Naive thymus-derived CD4-positive, alpha-beta T cell (primary cell): ENCODE measurements at regions of chr14 and their contacts with region 1.

Region 1: GRCh38 chr14:67816326-67817002 is at the start of gene ZFYVE26:
- DNase-seq: peak; percentile 55 to 93 (median 87)
- ATAC-seq: peak; percentile 96
- H3K4me3 ChIP-seq: peak within 1 kb of the TSS; percentile 91
- H3K4me3 Mint-ChIP-seq: peak within 1 kb of the TSS; percentile 87 to 99 (median 98)
- H3K27ac ChIP-seq: peak within 1 kb of the TSS; percentile 76
- H3K27ac Mint-ChIP-seq: peak within 1 kb of the TSS; percentile 91 to 99 (median 98)
- H3K4me1 ChIP-seq: peaks cover 11 to 15% of the 10 kb centered on the region in 2 donors
- H3K4me1 Mint-ChIP-seq: peaks cover 24 to 73% (median 65%) of the 10 kb centered on the region in 7 donors
- H3K27me3 ChIP-seq: no peaks in the 10 kb centered on the region
- H3K27me3 Mint-ChIP-seq: no peaks in the 10 kb centered on the region
- total RNA-seq, gene ZFYVE26: 25.0 to 38.9 (median 31.1) TPM

Region 2: DNA sequence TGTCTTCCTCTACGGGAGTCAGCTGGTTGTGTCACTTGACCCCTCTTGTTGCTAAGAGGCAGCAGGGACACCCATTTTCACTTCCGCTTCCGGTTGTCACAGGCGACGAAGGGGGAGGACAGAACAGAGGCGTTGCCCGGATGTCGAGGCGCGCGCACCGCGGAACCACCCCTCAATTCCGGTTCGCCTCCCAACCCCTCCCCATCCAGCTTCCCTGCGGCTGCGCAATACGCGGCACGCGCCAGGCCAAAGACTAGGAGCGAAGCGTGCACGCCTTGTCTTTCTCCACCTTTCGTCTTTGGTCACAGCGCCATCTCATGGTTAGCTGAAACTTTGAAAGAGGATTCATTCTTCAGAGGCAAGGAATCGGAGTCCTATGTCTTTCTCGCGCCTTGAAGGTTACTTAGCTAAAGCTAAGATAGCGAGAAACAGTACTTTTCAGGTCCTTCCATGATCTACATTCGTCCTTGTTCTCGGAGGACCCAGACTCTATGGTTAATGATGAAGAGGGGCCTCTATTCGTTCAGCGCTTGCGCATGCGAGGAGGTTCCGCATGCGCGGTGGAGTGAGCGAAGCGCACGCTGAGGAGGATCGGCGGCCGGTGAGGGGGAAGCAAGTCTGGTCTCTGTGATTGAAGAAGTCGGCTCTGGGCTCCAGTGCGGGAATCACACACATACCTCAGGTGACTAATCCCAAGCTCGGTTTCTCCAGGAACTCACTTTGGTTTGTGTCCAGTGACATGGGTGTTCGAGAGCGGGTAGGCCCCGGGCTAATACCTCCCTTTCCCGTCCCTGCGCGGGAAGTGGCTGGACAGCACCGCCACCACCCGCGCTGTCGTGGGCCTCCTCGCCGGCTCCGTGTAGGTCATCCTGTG is 456.5 kb before region 1 on chr14 and contains the starts of genes ATP6V1D and EIF2S1:
- CTCF ChIA-PET with region 1: no interaction called
- POLR2A ChIA-PET with region 1: interaction called, 4 read pairs
- intact Hi-C with region 1: loop called (anchors 1 kb)
- DNase-seq: peak; percentile 97 to 100 (median 100)
- ATAC-seq: peak; percentile 94
- H3K4me3 ChIP-seq: peak within 1 kb of the TSS; percentile 87
- H3K4me3 Mint-ChIP-seq: peak within 1 kb of the TSS; percentile 93 to 99 (median 98)
- H3K27ac ChIP-seq: peak within 1 kb of the TSS; percentile 82
- H3K27ac Mint-ChIP-seq: peak within 1 kb of the TSS; percentile 94 to 99 (median 96)
- H3K4me1 ChIP-seq: peaks cover 24 to 38% of the 10 kb centered on the region in 2 donors
- H3K4me1 Mint-ChIP-seq: peaks cover 43 to 94% (median 85%) of the 10 kb centered on the region in 7 donors
- H3K27me3 ChIP-seq: no peaks in the 10 kb centered on the region
- H3K27me3 Mint-ChIP-seq: peaks cover 0 to 5% (median 0%) of the 10 kb centered on the region in 5 donors
- total RNA-seq, gene ATP6V1D: 28.5 to 41.5 (median 33.4) TPM
- total RNA-seq, gene EIF2S1: 41.4 to 115 (median 49.4) TPM

Region 3: DNA sequence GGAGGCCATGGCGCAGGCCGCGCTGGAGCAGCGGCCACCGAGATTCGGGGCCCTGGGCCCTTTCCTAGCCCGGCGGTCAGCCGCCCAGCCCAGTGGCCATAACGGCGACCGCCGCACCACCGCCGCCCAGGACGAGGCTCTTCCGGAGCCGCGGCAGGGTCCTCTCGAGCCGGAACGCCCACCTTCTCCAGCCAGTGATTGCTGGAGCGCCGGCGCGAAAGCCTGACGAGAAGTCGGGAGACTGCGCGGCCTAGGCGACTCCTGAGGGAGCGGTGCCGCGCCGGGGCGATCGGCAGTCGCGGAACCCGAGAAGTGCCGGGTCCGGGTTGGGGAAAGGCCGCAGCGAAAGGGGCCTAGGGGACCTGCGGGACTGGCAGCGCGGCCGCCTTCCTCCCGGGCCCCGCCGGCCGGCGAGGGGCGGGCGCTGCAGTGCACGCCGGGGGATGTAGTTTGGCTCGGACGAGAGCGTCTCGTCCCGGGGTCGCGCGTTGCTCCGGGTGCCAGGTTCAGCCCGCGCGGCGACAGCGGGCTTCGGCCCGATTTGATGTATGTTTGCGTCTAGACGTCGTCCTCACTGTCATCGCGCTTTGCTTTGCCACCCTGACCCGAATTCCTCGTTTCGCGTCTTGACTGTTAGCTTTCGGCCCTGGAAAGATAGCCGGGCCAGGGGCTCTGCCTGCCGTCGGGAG is 141.8 kb before region 1 on chr14 and contains the start of gene VTI1B:
- CTCF ChIA-PET with region 1: no interaction called
- POLR2A ChIA-PET with region 1: no interaction called
- intact Hi-C with region 1: loop called (anchors 1 kb)
- DNase-seq: peak; percentile 71 to 84 (median 80)
- ATAC-seq: peak; percentile 95
- H3K4me3 ChIP-seq: peak within 1 kb of the TSS; percentile 65
- H3K4me3 Mint-ChIP-seq: peak within 1 kb of the TSS; percentile 91 to 96 (median 93)
- H3K27ac ChIP-seq: peak within 1 kb of the TSS; percentile 95
- H3K27ac Mint-ChIP-seq: peak within 1 kb of the TSS; percentile 82 to 96 (median 92)
- H3K4me1 ChIP-seq: peaks cover 17 to 21% of the 10 kb centered on the region in 2 donors
- H3K4me1 Mint-ChIP-seq: peaks cover 22 to 62% (median 55%) of the 10 kb centered on the region in 7 donors
- H3K27me3 ChIP-seq: no peaks in the 10 kb centered on the region
- H3K27me3 Mint-ChIP-seq: no peaks in the 10 kb centered on the region
- total RNA-seq, gene VTI1B: 49.2 to 82.4 (median 65.9) TPM

Region 4: GRCh38 chr14:67798731-67799130 is 17.7 kb before region 1 on chr14:
- CTCF ChIA-PET with region 1: no interaction called
- POLR2A ChIA-PET with region 1: no interaction called
- intact Hi-C with region 1: no loop called
- DNase-seq: no peak
- ATAC-seq: no peak
- H3K4me3 ChIP-seq: no peak overlapping the region
- H3K4me3 Mint-ChIP-seq: no peak overlapping the region
- H3K27ac ChIP-seq: no peak overlapping the region
- H3K27ac Mint-ChIP-seq: no peak overlapping the region
- H3K4me1 ChIP-seq: no peaks in the 10 kb centered on the region
- H3K4me1 Mint-ChIP-seq: peaks cover 0 to 4% (median 0%) of the 10 kb centered on the region in 7 donors
- H3K27me3 ChIP-seq: no peaks in the 10 kb centered on the region
- H3K27me3 Mint-ChIP-seq: no peaks in the 10 kb centered on the region

Region 5: GRCh38 chr14:68210729-68211299 is 394.4 kb after region 1 on chr14:
- CTCF ChIA-PET with region 1: no interaction called
- POLR2A ChIA-PET with region 1: no interaction called
- intact Hi-C with region 1: loop called in 1 of 2 experiments (anchors 10 kb)
- DNase-seq: peak in 8 of 9 donors; percentile 10 to 54 (median 43)
- ATAC-seq: peak; percentile 86
- H3K4me3 ChIP-seq: peak overlapping the region; percentile 59
- H3K4me3 Mint-ChIP-seq: peak overlapping the region; percentile 75 to 90 (median 88)
- H3K27ac ChIP-seq: peak overlapping the region; percentile 23
- H3K27ac Mint-ChIP-seq: peak overlapping the region; percentile 71 to 94 (median 87)
- H3K4me1 ChIP-seq: peaks cover 28 to 33% of the 10 kb centered on the region in 2 donors
- H3K4me1 Mint-ChIP-seq: peaks cover 31 to 50% (median 38%) of the 10 kb centered on the region in 7 donors
- H3K27me3 ChIP-seq: no peaks in the 10 kb centered on the region
- H3K27me3 Mint-ChIP-seq: peaks cover 0 to 2% (median 0%) of the 10 kb centered on the region in 5 donors

Region 6: DNA sequence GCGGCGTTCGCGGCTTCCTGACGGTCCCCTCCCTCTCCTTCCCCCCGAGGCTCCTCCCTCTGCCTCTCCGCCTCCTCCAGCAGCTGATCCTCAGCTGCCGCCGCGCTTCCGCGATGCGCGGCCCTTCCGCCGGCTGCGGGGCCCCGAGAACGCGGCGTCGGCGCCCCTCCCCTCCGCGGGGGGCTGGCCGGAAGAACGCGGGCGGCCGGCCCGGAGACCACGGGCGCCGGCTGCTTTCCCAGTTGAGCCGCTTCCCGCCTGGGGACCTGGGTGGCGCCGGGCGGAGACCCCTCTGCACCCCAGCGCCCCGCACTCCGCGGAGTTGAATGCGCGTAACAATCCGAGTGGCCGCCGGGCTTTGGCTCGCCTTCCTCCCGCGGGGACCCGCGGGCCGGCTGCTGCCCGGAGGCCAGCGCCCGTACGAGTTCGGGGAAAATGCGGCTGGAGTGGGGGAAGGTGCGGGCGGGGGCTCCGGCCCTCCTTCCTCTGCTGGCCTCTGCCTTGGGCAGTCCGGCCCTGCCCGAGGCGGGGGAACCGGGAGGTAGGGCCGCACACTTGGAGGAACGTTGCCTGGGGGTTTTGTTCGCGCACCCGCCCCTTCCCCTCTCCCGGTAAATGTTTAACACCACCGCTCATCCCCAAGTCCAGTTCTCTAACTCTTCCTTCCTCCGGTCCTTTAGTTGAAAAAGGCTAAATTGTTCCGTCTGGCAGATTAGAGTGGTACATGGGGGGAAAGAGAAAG is 1336.8 kb after region 1 on chr14:
- CTCF ChIA-PET with region 1: no interaction called
- POLR2A ChIA-PET with region 1: no interaction called
- intact Hi-C with region 1: loop called in 1 of 2 experiments (anchors 2 kb)
- DNase-seq: peak; percentile 76 to 96 (median 91)
- ATAC-seq: peak; percentile 94
- H3K4me3 ChIP-seq: peak overlapping the region; percentile 83
- H3K4me3 Mint-ChIP-seq: peak overlapping the region; percentile 89 to 100 (median 97)
- H3K27ac ChIP-seq: peak overlapping the region; percentile 90
- H3K27ac Mint-ChIP-seq: peak overlapping the region; percentile 84 to 98 (median 93)
- H3K4me1 ChIP-seq: peaks cover 11 to 12% of the 10 kb centered on the region in 2 donors
- H3K4me1 Mint-ChIP-seq: peaks cover 30 to 37% (median 36%) of the 10 kb centered on the region in 7 donors
- H3K27me3 ChIP-seq: no peaks in the 10 kb centered on the region
- H3K27me3 Mint-ChIP-seq: peaks cover 0 to 36% (median 0%) of the 10 kb centered on the region in 5 donors

Region 7: GRCh38 chr14:69611201-69612011 is 1794.9 kb after region 1 on chr14 and contains the start of gene SUSD6:
- CTCF ChIA-PET with region 1: no interaction called
- POLR2A ChIA-PET with region 1: no interaction called
- intact Hi-C with region 1: loop called in 1 of 2 experiments (anchors 5 kb)
- DNase-seq: peak; percentile 79 to 87 (median 85)
- ATAC-seq: peak; percentile 88
- H3K4me3 ChIP-seq: peak within 1 kb of the TSS; percentile 91
- H3K4me3 Mint-ChIP-seq: peak within 1 kb of the TSS; percentile 91 to 98 (median 94)
- H3K27ac ChIP-seq: peak within 1 kb of the TSS; percentile 85
- H3K27ac Mint-ChIP-seq: peak within 1 kb of the TSS; percentile 95 to 99 (median 98)
- H3K4me1 ChIP-seq: peaks cover 38 to 54% of the 10 kb centered on the region in 2 donors
- H3K4me1 Mint-ChIP-seq: peaks cover 44 to 69% (median 63%) of the 10 kb centered on the region in 7 donors
- H3K27me3 ChIP-seq: no peaks in the 10 kb centered on the region
- H3K27me3 Mint-ChIP-seq: no peaks in the 10 kb centered on the region
- total RNA-seq, gene SUSD6: 42.9 to 90.8 (median 65.0) TPM